Activated B cell treated with CpG ODN at 0.5 μM for 24 hours (primary cell): ENCODE measurements at regions of chr5 and their contacts with region 1.

Region 1: DNA sequence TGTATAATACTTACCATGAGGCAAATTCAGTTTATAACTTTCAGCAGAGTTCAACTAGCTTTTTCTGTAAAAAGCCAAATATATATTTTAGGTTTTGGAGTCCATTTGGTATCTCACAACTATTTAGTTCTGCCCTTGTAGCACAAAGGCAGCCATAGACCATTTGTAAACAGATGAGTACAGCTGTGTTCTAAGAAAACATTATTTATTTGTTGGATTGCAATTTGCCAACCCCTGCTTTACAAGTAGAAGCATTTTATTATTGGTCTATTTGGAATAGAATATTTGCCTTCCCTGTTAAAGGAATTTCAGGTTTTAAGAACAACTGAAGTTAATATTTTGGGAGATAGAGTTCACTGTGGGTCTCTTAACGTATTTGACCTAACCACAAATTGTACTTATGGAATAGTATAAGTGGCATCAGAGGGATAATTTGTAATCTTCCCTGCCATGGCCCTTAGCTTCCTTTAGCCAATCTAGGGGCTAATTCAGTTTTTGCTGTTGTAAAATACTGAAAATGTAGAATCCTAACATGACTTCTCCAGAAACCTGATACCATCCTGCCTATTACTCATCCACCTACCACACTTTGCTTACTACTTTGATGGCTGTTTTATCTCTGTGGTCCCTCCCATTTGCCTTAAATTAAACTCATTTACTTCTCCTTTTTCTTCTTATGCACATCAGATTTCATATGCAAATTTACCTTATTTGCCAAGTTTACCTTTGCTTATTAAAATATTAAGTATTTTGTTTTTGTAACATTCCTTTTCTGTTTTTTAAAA is 109.2 kb downstream of the DMXL1 start:
- DNase-seq: no peak
- ATAC-seq: no peak
- H3K4me3 Mint-ChIP-seq: no peak overlapping the region
- H3K27ac Mint-ChIP-seq: peak overlapping the region; percentile 31
- H3K4me1 Mint-ChIP-seq: peaks cover 19% of the 10 kb centered on the region
- H3K27me3 Mint-ChIP-seq: no peaks in the 10 kb centered on the region
- CTCF ChIP-seq: no peak

Region 2: GRCh38 chr5:118628660-118629354 is 551.2 kb before region 1 on chr5:
- CTCF ChIA-PET with region 1: no interaction called
- POLR2A ChIA-PET with region 1: no interaction called
- intact Hi-C with region 1: no loop called
- DNase-seq: no peak
- ATAC-seq: no peak
- H3K4me3 Mint-ChIP-seq: no peak overlapping the region
- H3K27ac Mint-ChIP-seq: no peak overlapping the region
- H3K4me1 Mint-ChIP-seq: no peaks in the 10 kb centered on the region
- H3K27me3 Mint-ChIP-seq: no peaks in the 10 kb centered on the region
- CTCF ChIP-seq: no peak

Region 3: DNA sequence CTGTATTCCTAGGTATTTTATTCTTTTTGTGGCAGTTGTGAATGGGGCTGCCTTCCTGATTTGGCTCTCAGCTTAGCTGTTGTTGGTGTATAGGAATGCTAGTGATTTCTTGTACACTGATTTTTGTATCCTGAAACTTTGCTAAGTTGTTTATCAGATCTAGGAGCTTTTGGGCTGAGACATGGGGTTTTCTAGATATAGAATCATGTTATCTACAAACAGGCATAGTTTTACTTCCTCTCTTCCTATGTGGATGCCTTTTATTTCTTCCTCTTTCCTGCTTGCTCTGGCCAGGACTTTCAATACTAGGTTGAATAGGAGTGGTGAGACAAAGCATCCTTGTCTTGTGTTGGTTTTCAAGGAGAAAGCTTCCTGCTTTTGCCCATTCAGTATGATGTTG is 20.7 kb after region 1 on chr5:
- CTCF ChIA-PET with region 1: no interaction called
- POLR2A ChIA-PET with region 1: no interaction called
- intact Hi-C with region 1: loop called (anchors 2 kb)
- DNase-seq: no peak
- ATAC-seq: no peak
- H3K4me3 Mint-ChIP-seq: peak overlapping the region; percentile 11
- H3K27ac Mint-ChIP-seq: peak overlapping the region; percentile 70
- H3K4me1 Mint-ChIP-seq: peaks cover 32% of the 10 kb centered on the region
- H3K27me3 Mint-ChIP-seq: no peaks in the 10 kb centered on the region
- CTCF ChIP-seq: no peak